ENCODE measurements at regions of chr14 and their contacts with region 1.

Region 1: DNA sequence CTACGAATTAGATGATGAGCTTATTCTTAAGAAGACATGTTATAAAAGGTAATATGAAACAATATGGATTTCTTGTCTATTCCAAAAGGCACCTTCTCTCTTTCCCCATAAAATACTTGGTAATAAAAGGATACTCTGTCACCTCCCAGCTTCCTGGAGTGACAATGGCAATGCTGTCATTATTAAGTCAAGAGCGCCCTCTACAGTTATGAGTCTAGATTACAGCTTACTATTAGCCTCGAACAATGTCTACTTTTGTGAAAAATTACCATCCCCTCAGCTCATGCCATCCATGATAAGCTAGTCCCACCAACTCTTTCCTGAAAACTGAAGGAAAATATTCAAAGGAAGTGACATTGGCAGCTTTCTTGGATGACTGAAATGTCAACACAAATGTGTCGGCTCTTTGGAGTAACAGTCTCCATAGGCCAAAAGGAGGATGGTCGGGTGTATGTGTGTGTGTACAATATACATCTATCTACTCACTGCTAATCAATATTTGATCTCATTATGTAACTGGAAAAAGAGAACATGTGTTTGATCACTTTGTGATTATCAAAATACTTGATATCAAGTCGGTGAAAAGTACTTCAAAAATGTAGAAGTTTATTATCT is 48.7 kb upstream of the CDKN3 start:
- DNase-seq: peak; percentile 7 to 40 (median 25)
- H3K4me3 ChIP-seq: no peak overlapping the region
- H3K4me3 Mint-ChIP-seq: no peak overlapping the region
- H3K27ac ChIP-seq: no peak overlapping the region
- H3K27ac Mint-ChIP-seq: no peak overlapping the region
- H3K4me1 ChIP-seq: peaks cover 3% of the 10 kb centered on the region in 2 donors
- H3K4me1 Mint-ChIP-seq: peaks cover 6% of the 10 kb centered on the region
- H3K27me3 ChIP-seq: peaks cover 0 to 6% of the 10 kb centered on the region in 2 donors
- H3K27me3 Mint-ChIP-seq: peaks cover 1 to 10% (median 9%) of the 10 kb centered on the region in 3 donors
- CTCF ChIP-seq: peak; percentile 82

Region 2: GRCh38 chr14:53295985-53296582 is 1052.0 kb before region 1 on chr14:
- intact Hi-C with region 1: loop called (anchors 5 kb)
- DNase-seq: peak; percentile 6 to 35 (median 23)
- H3K4me3 ChIP-seq: no peak overlapping the region
- H3K4me3 Mint-ChIP-seq: no peak overlapping the region
- H3K27ac ChIP-seq: no peak overlapping the region
- H3K27ac Mint-ChIP-seq: no peak overlapping the region
- H3K4me1 ChIP-seq: no peaks in the 10 kb centered on the region
- H3K4me1 Mint-ChIP-seq: no peaks in the 10 kb centered on the region
- H3K27me3 ChIP-seq: no peaks in the 10 kb centered on the region
- H3K27me3 Mint-ChIP-seq: peaks cover 0 to 2% (median 0%) of the 10 kb centered on the region in 3 donors
- CTCF ChIP-seq: peak; percentile 86

Region 3: GRCh38 chr14:53539489-53540126 is 808.5 kb before region 1 on chr14:
- intact Hi-C with region 1: loop called in 1 of 2 experiments (anchors 5 kb)
- DNase-seq: no peak
- H3K4me3 ChIP-seq: no peak overlapping the region
- H3K4me3 Mint-ChIP-seq: no peak overlapping the region
- H3K27ac ChIP-seq: no peak overlapping the region
- H3K27ac Mint-ChIP-seq: peak overlapping the region in 1 of 7 donors; percentile 52
- H3K4me1 ChIP-seq: no peaks in the 10 kb centered on the region
- H3K4me1 Mint-ChIP-seq: no peaks in the 10 kb centered on the region
- H3K27me3 ChIP-seq: no peaks in the 10 kb centered on the region
- H3K27me3 Mint-ChIP-seq: peaks cover 0 to 3% (median 2%) of the 10 kb centered on the region in 3 donors
- CTCF ChIP-seq: peak; percentile 35

Region 4: GRCh38 chr14:54396493-54397335 is 48.6 kb after region 1 on chr14 and contains the start of gene CDKN3:
- intact Hi-C with region 1: no loop called
- DNase-seq: peak; percentile 97 to 99 (median 98)
- H3K4me3 ChIP-seq: peak within 1 kb of the TSS; percentile 85 to 96 (median 90)
- H3K4me3 Mint-ChIP-seq: peak within 1 kb of the TSS; percentile 83 to 93
- H3K27ac ChIP-seq: peak within 1 kb of the TSS in 1 of 2 donors; percentile 78
- H3K27ac Mint-ChIP-seq: peak within 1 kb of the TSS in 6 of 7 donors; percentile 20 to 85 (median 72)
- H3K4me1 ChIP-seq: peaks cover 27 to 31% of the 10 kb centered on the region in 2 donors
- H3K4me1 Mint-ChIP-seq: peaks cover 25% of the 10 kb centered on the region
- H3K27me3 ChIP-seq: no peaks in the 10 kb centered on the region
- H3K27me3 Mint-ChIP-seq: peaks cover 0 to 2% (median under 1%) of the 10 kb centered on the region in 3 donors
- CTCF ChIP-seq: no peak
- polyA plus RNA-seq, gene CDKN3: 0.45 to 1.8 (median 0.65) TPM